ENCODE measurements at regions of chr11 and their contacts with region 1.

Region 1: DNA sequence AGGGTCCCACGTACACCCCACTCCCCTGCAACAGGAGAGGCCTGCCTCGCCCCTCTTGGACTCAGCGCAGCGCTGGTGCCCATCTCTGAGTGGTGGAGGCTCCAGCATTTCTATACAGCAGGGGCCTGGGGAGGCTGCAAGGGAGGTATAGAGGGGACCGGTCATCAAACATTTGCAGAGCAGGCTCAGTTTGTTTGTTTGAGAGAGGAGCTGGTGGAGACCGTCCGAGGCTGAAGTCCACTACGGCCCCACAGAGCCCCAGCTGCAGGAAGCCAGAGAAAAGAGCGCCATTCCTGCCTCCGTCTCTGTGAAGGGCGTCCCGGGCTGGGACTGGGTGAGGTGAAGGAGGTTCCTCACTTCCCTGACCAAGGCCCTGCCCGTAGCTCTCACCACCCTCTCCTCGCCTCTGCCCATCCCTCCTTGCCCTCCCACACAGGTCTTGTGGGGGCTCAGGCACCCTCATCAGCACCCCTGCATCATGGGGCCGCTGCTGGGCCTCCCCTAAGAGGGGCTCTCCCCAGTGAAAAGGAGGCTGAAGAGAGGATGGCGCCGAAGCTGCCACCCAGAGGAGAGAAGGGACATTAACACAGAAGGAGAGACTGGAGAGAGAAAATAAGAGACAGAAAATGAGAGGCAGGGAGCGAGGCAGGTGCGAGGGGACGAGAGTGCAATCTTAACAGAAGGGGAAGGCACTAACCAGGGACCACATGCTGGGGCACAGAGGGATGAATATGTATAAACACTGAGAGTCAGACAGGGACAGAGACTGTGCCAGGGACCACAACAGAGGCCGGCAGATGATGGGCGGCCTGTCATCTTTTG is 24.5 kb downstream of the RPUSD4 start:
- DNase-seq: no peak
- H3K4me3 ChIP-seq: no peak overlapping the region
- H3K27ac ChIP-seq: no peak overlapping the region
- H3K4me1 ChIP-seq: no peaks in the 10 kb centered on the region
- H3K27me3 ChIP-seq: no peaks in the 10 kb centered on the region
- CTCF ChIP-seq: no peak

Region 2: GRCh38 chr11:125933030-125933813 is 253.7 kb before region 1 on chr11:
- intact Hi-C with region 1: loop called (anchors 5 kb)
- DNase-seq: peak in 1 of 2 donors; percentile 38
- H3K4me3 ChIP-seq: no peak overlapping the region
- H3K27ac ChIP-seq: no peak overlapping the region
- H3K4me1 ChIP-seq: no peaks in the 10 kb centered on the region
- H3K27me3 ChIP-seq: peaks cover 0 to 27% of the 10 kb centered on the region in 2 donors
- CTCF ChIP-seq: no peak